A549 (cell line): ENCODE measurements at regions of chr9 and their contacts with region 1.

Region 1: DNA sequence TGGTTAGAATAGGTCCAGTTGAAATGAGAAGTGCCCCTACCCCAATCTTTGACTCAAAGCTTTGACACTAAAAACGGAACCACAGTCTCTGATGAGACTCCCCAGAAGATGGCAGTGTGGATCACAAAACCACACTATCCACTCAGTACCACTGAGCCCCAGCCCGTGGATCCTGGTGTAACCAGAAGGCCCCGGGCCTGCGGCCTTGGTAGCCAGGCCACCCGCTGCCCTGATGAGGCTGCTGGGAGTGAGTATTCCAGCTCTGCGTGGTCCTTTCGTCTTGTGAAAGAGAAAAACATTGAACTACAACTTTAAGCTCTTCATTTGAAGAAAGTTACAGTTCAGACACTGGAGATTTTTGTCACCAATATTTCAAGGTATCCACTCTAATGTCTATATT is 42.2 kb upstream of the FBP1 start:
- DNase-seq: peak; percentile 86
- ATAC-seq: peak; percentile 98 to 99
- H3K4me3 ChIP-seq: no peak overlapping the region
- H3K27ac ChIP-seq: peak overlapping the region; percentile 71 to 82
- H3K4me1 ChIP-seq: peaks cover 16% of the 10 kb centered on the region
- CTCF ChIP-seq: peak; percentile 91
- EP300 ChIP-seq: no peak
- POLR2A ChIP-seq: no peak
- RAD21 ChIP-seq: peak; percentile 94 to 97

Region 2: DNA sequence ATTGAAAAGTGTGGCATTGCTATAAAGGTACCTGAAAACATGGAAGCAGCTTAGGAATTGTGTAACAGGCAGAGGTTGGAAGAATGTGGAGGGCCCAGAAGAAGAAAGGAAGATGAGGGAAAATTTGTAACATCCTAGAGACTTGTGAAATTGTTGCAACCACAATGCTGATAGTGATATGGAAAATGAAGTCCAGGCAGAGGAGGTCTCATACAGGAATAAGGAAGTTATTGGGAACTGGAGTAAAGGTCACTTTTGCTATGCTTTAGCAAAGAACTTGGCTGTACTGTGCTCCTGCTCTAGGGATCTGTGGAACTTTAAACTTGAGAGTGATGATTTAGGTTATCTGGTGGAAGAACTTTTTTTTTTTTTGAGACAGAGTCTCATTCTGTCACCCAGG is 553.7 kb before region 1 on chr9:
- CTCF ChIA-PET with region 1: no interaction called
- POLR2A ChIA-PET with region 1: no interaction called
- DNase-seq: no peak
- ATAC-seq: no peak
- H3K4me3 ChIP-seq: no peak overlapping the region
- H3K27ac ChIP-seq: no peak overlapping the region
- H3K4me1 ChIP-seq: no peaks in the 10 kb centered on the region
- CTCF ChIP-seq: no peak
- EP300 ChIP-seq: no peak
- POLR2A ChIP-seq: no peak
- RAD21 ChIP-seq: no peak

Region 3: DNA sequence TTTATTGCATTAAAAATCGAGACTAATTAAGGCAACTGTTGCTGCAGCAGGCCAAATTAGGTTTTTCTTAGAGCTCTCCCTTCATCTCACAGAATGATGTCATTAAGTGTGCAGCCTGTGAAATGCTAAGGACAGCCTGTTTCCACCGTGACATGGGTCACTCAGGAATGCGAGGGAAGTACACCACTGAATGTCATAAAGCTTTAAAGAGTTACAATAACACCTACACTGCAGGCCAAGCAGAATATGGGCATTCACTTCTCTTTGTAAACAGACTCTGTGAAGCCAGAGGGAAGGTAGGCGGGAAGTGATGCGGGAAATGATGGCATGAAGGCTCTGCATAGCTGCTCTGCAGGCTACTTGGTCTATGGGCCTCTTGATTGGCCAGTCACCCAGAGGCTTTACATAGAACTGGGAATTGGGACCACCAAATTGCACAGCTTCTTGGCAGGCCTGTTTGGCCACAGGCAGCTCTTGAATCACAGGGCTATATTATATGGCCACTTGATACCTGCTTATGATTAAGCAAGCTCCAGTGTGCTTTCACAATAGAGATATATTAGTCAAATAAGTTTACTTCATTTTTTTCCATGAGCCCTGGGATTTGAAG is 16.6 kb after region 1 on chr9:
- CTCF ChIA-PET with region 1: interaction called, 26 read pairs
- POLR2A ChIA-PET with region 1: interaction called, 4 read pairs
- DNase-seq: no peak
- ATAC-seq: no peak; a peak in 1 of 6 replicates
- H3K4me3 ChIP-seq: no peak overlapping the region
- H3K27ac ChIP-seq: no peak overlapping the region
- H3K4me1 ChIP-seq: peaks cover 15% of the 10 kb centered on the region
- CTCF ChIP-seq: no peak
- EP300 ChIP-seq: no peak
- POLR2A ChIP-seq: no peak
- RAD21 ChIP-seq: no peak

Region 4: DNA sequence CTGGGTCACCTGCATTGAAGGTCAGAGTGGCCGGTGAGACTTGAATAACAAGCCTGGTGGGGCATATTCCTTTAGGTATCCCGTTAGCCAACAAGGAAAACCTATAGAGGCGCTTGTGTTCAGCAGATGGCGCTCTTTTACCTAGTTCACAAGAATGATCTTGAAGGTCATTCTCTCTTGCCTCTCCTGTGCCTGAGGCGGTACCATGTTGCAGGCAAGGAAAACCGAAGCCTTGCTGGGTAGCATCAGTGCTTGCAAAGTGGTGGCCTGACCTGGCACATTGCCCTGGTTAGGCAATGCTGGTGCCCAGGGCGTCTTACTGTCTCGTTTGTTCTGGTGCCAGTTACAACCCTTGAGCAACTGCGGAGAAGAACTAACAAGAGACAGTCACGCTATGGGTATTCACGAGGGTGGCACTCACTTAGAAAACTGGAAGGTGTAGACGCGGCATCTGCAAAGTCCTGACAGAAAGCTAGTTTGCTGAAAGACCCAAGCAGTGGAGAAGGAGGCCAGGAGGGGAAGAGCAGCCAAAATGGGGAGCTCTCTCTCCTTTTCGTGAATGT is 101.7 kb after region 1 on chr9:
- CTCF ChIA-PET with region 1: interaction called, 39 read pairs
- POLR2A ChIA-PET with region 1: no interaction called
- DNase-seq: peak; percentile 80 to 100
- ATAC-seq: peak; percentile 96 to 100
- H3K4me3 ChIP-seq: no peak overlapping the region
- H3K27ac ChIP-seq: peak overlapping the region; percentile 86 to 91
- H3K4me1 ChIP-seq: peaks cover 60% of the 10 kb centered on the region
- CTCF ChIP-seq: peak; percentile 88
- EP300 ChIP-seq: peak; percentile 100
- POLR2A ChIP-seq: no peak
- RAD21 ChIP-seq: peak; percentile 98 to 100

Region 5: GRCh38 chr9:94805585-94805984 is 124.1 kb after region 1 on chr9:
- CTCF ChIA-PET with region 1: no interaction called
- POLR2A ChIA-PET with region 1: no interaction called
- DNase-seq: peak; percentile 82 to 99
- ATAC-seq: peak; percentile 87 to 94
- H3K4me3 ChIP-seq: no peak overlapping the region; the same call in 2 of the 3 replicates
- H3K27ac ChIP-seq: peak overlapping the region; percentile 92
- H3K4me1 ChIP-seq: peaks cover 90% of the 10 kb centered on the region
- CTCF ChIP-seq: no peak
- EP300 ChIP-seq: peak; percentile 95
- POLR2A ChIP-seq: no peak
- RAD21 ChIP-seq: peak; percentile 39 to 65

Region 6: GRCh38 chr9:95073021-95073607 is 391.6 kb after region 1 on chr9:
- CTCF ChIA-PET with region 1: interaction called, 23 read pairs
- POLR2A ChIA-PET with region 1: no interaction called
- DNase-seq: peak in 1 of 2 experiments; percentile 44
- ATAC-seq: peak; percentile 53 to 62
- H3K4me3 ChIP-seq: no peak overlapping the region
- H3K27ac ChIP-seq: peak overlapping the region in 1 of 2 experiments; percentile 55; a peak in 3 of 6 replicates
- H3K4me1 ChIP-seq: peaks cover 100% of the 10 kb centered on the region
- CTCF ChIP-seq: no peak
- EP300 ChIP-seq: no peak
- POLR2A ChIP-seq: no peak
- RAD21 ChIP-seq: no peak

Region 7: DNA sequence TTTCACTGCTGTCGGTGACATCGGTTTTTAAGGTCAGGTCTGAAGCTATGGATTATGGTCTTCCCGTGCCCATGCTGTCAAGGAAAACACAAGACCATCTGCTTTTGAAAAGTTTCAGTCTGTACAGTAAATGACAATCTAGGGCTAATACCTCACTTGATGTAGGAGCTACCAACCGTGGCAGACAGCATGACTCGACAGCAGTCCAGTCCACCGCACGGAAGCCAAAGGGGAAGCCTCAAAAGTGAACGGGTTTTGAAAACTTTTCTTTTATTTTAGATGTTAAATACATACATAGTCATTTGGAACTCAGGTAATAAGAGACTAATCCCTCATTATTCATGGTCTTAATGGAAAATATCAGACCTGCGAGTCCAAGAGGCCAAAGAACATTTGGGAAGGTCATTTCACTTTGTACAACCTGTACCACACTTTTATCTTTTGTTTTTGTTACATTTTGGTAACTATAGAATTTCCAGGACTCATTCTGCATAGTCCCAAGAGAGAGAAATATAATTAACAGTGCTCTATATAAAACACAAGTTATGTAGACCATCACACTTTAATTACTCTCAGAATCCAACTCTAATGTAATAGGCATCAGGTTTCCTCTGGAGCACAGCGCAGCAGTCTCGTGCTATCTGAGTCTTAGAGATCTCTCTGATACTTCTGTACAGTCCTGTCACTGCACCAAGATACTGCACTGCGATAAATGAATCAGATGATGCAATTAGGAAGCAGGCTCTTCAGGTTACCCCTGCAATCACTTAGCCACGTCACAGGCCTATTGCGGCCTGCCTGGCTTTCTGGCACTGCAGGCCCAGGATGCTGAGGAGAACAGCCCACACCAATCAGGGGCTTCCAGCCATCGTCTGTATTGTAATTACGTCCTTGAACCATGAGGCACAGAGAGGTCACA is 451.2 kb after region 1 on chr9:
- CTCF ChIA-PET with region 1: interaction called, 284 read pairs
- POLR2A ChIA-PET with region 1: interaction called, 4 read pairs
- DNase-seq: no peak
- ATAC-seq: no peak
- H3K4me3 ChIP-seq: no peak overlapping the region
- H3K27ac ChIP-seq: no peak overlapping the region
- H3K4me1 ChIP-seq: peaks cover 25% of the 10 kb centered on the region
- CTCF ChIP-seq: no peak
- EP300 ChIP-seq: no peak
- POLR2A ChIP-seq: no peak
- RAD21 ChIP-seq: no peak

Region 8: DNA sequence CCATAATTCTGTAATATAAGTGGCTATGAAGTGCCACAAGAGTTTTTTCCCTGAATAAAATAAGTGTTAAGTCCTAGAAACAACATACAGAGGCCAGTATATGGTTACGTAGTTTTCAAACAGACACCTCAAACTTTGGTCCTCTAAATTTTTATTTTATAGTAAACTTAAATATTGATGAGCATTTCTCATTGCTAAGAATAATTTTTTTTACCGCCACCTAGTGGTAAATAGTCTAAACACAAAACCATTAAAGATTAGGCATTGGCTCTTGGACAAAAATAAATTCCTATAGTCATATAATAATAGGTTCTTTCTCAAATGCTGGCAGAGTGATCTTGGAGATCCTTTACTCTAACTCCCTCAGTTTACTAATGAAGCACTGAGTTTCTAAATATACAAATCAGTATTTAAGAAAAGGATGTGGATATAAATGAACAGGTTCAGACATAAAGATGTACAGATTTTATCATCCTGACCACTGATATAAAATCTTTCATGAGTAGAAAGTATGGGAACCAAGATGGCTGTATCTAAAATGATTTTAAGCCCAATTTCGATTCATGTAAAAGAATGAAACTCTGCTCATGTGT is 499.8 kb after region 1 on chr9:
- CTCF ChIA-PET with region 1: interaction called, 12 read pairs
- POLR2A ChIA-PET with region 1: no interaction called
- DNase-seq: peak in 1 of 2 experiments; percentile 34
- ATAC-seq: no peak
- H3K4me3 ChIP-seq: no peak overlapping the region
- H3K27ac ChIP-seq: no peak overlapping the region
- H3K4me1 ChIP-seq: no peaks in the 10 kb centered on the region
- CTCF ChIP-seq: peak; percentile 57
- EP300 ChIP-seq: no peak
- POLR2A ChIP-seq: no peak
- RAD21 ChIP-seq: no peak; a peak in 1 of 5 replicates